Ascending aorta (tissue), 2 donors: ENCODE measurements at regions of chr10 and their contacts with region 1.

Region 1: DNA sequence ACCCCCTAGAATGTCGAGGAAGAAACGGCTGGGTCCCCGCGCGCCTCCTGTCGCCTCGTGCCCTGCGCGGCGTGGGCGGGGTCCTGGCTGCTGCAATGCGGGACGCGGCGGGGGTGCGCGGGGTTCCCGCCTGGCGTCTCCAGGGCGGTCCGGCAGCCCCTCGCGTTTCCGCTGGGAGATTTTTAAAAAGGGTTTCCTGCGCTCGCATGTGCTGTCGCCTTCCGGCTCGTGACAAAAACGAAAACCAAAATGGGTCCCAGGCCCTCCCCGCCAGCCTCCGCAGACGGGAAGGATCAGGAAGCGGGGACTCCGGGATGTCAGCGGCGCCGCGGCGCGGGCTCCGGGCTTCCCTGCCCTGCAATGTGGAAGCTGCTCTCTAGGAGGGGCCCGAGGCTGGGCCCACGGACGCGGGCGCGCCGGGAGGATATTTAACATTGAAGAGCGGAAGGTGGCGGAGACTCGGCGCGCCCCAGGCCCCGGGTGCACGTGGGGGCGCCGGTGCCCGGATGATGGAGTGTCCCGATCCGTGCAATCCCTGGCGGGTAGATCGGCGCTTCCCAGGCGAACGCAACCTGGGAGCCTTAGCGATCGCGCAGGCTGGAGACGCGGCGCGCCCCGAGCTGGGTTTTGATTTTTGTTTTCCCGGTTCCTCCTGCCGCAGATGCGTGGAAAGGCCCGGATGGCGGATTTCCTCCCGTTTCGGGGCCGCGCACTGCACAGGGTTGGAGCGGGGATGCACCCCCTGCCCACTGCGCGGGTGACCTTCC is 1.0 kb downstream of the PFKP start:
- DNase-seq: peak in 1 of 2 donors; percentile 85
- H3K4me3 ChIP-seq: peak overlapping the region; percentile 87
- H3K27ac ChIP-seq: peak overlapping the region; percentile 72 to 78
- H3K4me1 ChIP-seq: peaks cover 0 to 14% of the 10 kb centered on the region in 2 donors
- H3K27me3 ChIP-seq: no peaks in the 10 kb centered on the region
- CTCF ChIP-seq: peak; percentile 37 to 42 (median 39)

Region 2: DNA sequence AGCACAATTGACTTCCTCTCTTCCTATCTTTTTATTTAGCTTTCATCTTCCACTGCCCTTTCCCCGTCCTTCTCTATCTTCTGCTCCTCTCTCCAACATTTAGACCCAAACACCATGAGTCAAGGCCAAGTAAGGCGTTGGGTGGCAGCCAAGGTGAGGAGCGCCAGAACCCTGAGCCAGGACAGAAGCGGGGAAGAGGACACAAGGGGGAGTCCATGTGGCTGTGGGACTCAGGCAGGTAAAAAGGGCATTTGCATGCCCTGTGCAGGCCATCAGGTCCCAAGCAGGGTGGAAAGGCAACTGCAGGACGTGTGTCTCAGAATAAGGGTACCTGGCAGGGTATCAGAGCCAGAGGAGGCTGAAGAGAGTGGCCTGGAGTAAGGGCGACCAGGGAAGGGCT is 193.4 kb before region 1 on chr10:
- intact Hi-C with region 1: no loop called
- DNase-seq: no peak
- H3K4me3 ChIP-seq: no peak overlapping the region
- H3K27ac ChIP-seq: no peak overlapping the region
- H3K4me1 ChIP-seq: no peaks in the 10 kb centered on the region
- H3K27me3 ChIP-seq: no peaks in the 10 kb centered on the region
- CTCF ChIP-seq: no peak

Region 3: GRCh38 chr10:3043512-3044368 is 24.6 kb before region 1 on chr10:
- intact Hi-C with region 1: loop called (anchors 2 kb)
- DNase-seq: peak in 1 of 2 donors; percentile 84
- H3K4me3 ChIP-seq: no peak overlapping the region
- H3K27ac ChIP-seq: peak overlapping the region; percentile 37 to 69
- H3K4me1 ChIP-seq: peaks cover 8 to 27% of the 10 kb centered on the region in 2 donors
- H3K27me3 ChIP-seq: no peaks in the 10 kb centered on the region
- CTCF ChIP-seq: peak; percentile 74 to 88 (median 82)

Region 4: DNA sequence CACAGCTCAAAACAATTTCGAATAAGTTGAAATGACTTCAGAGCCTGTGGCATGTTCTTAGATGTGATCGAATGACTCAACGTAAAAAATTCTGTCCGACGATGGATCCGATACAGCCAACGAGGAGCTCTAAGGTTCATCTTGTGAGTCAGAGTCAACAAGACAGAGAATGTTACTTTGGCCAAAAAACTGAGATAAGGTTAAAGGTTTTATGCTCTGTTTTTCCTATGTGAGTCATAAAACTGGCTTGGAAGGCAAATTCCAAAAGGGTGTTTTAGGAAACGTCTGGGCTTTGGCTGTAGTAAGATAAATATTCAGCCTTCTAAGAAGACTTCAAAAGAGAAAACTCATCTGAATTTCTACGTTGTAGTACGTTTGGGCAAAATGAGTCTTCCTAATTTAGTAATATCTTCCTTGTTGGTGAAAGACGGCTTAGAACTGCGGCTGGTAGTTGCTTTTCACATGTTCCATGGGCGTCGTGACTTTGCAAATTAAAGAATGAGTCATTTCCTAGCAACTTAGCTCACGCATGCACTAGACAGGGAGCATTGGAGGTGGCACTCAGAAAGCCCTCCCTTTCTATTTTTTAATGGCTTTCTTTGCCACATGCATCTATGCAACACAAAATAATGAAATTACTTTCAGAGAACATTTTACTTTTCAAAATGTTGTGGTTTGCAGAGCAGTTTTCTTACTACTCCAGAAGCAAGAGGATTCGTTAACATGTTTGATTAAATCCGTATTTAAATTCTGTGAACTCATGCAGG is 27.2 kb after region 1 on chr10:
- intact Hi-C with region 1: loop called (anchors 1 kb)
- DNase-seq: peak in 1 of 2 donors; percentile 84
- H3K4me3 ChIP-seq: peak overlapping the region; percentile 7 to 56
- H3K27ac ChIP-seq: peak overlapping the region; percentile 88 to 90
- H3K4me1 ChIP-seq: peaks cover 17 to 33% of the 10 kb centered on the region in 2 donors
- H3K27me3 ChIP-seq: no peaks in the 10 kb centered on the region
- CTCF ChIP-seq: no peak

Region 5: GRCh38 chr10:3107426-3107961 is 39.1 kb after region 1 on chr10:
- intact Hi-C with region 1: loop called (anchors 1 kb)
- DNase-seq: peak; percentile 84 to 98
- H3K4me3 ChIP-seq: peak overlapping the region in 1 of 2 donors; percentile 26
- H3K27ac ChIP-seq: peak overlapping the region; percentile 88 to 95
- H3K4me1 ChIP-seq: peaks cover 12 to 38% of the 10 kb centered on the region in 2 donors
- H3K27me3 ChIP-seq: no peaks in the 10 kb centered on the region
- CTCF ChIP-seq: no peak

Region 6: DNA sequence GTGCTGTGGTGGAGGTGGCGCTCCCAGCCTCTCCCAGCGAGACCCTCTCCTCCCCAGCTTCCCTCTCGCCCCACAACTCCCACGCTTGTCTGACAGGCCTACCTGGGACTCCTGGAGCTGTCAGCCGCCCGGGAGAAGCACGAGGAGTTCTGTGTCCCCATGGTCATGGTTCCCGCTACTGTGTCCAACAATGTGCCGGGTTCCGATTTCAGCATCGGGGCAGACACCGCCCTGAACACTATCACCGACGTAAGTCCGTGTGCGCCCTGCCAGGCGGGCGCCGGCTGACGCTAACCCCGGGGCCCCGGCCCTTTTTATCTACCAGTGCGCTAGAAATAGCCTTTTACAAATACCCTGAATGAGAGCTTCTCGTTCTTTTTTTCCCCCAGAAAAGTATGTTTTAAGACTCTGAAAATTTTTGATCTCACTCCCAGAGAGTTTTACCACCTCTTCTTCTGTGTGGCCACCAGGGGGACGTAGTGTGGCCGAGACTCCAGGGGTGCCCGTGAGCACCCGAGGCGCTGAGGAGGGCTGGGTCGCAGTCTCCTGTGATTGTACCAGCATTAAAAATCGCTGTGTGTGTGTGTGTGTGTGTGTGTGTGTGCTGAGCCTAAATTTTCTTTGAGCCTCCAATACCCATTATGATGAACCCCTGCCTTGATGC is 51.5 kb after region 1 on chr10:
- intact Hi-C with region 1: loop called (anchors 5 kb)
- DNase-seq: no peak
- H3K4me3 ChIP-seq: no peak overlapping the region
- H3K27ac ChIP-seq: peak overlapping the region; percentile 56 to 77
- H3K4me1 ChIP-seq: no peaks in the 10 kb centered on the region
- H3K27me3 ChIP-seq: no peaks in the 10 kb centered on the region
- CTCF ChIP-seq: peak; percentile 52 to 79 (median 55)